MCF 10A (cell line): ENCODE measurements at regions of chrX and their contacts with region 1.

Region 1: DNA sequence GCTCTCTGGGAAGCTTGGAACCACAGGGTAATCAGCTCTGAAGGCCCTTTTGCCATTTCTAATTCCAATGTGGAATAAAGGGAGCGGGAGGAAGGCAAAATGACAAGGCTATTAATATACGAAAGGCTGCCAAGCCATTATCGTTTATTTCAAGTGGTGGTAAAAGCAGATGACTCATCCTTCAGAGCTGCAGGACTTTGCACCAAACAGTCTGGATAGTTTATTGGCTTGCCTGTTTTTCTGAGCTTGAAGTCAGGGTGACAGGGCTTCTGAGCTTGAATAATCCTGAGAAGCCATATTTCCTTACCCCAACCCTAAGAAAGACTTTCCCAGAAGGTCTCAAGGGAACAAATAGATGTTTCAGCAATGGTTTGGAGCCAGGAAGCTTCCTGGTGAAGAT is 7.7 kb upstream of the GABRE start:
- DNase-seq: peak; percentile 74
- H3K4me3 Mint-ChIP-seq: no peak overlapping the region
- H3K27ac Mint-ChIP-seq: no peak overlapping the region
- H3K4me1 Mint-ChIP-seq: peaks cover 20% of the 10 kb centered on the region
- H3K27me3 Mint-ChIP-seq: no peaks in the 10 kb centered on the region
- CTCF ChIP-seq: no peak

Region 2: DNA sequence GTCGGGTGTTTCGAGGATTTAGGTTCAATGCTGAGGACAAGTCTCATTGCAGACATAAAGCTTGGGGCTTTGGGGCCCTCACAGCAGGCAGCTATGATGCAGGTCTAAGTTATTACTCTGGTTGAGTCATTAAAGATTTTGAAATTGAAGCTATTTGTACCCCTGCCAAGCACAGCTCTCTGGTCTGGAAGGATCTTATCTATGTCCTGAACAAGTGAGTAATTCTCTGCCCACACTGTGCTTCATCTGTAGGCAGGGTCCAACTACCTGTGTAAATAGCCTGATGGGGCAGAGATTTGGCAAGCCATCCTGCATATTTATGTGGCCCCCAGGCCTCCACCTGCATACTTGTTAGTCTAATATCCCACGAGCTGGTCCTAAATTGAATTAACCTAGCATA is 111.0 kb before region 1 on chrX:
- CTCF ChIA-PET with region 1: interaction called, 5 read pairs
- POLR2A ChIA-PET with region 1: no interaction called
- intact Hi-C with region 1: loop called (anchors 1 kb)
- DNase-seq: peak; percentile 94
- H3K4me3 Mint-ChIP-seq: peak overlapping the region; percentile 30
- H3K27ac Mint-ChIP-seq: no peak overlapping the region
- H3K4me1 Mint-ChIP-seq: peaks cover 19% of the 10 kb centered on the region
- H3K27me3 Mint-ChIP-seq: no peaks in the 10 kb centered on the region
- CTCF ChIP-seq: no peak

Region 3: GRCh38 chrX:152025656-152026440 is 43.6 kb after region 1 on chrX:
- CTCF ChIA-PET with region 1: no interaction called
- POLR2A ChIA-PET with region 1: interaction called, 10 read pairs
- intact Hi-C with region 1: no loop called
- DNase-seq: peak; percentile 38
- H3K4me3 Mint-ChIP-seq: no peak overlapping the region
- H3K27ac Mint-ChIP-seq: no peak overlapping the region
- H3K4me1 Mint-ChIP-seq: no peaks in the 10 kb centered on the region
- H3K27me3 Mint-ChIP-seq: no peaks in the 10 kb centered on the region
- CTCF ChIP-seq: no peak